ENCODE measurements at regions of chr9 and their contacts with region 1.

Region 1: GRCh38 chr9:27333241-27334052 is 36.5 kb upstream of the EQTN start:
- DNase-seq: peak; percentile 61
- H3K4me3 ChIP-seq: no peak overlapping the region
- H3K27ac ChIP-seq: no peak overlapping the region
- H3K4me1 ChIP-seq: peaks cover 6 to 34% (median 18%) of the 10 kb centered on the region in 4 donors
- H3K27me3 ChIP-seq: no peaks in the 10 kb centered on the region
- CTCF ChIP-seq: peak; percentile 85 to 95 (median 87)
- EP300 ChIP-seq: no peak
- POLR2A ChIP-seq: no peak

Region 2: DNA sequence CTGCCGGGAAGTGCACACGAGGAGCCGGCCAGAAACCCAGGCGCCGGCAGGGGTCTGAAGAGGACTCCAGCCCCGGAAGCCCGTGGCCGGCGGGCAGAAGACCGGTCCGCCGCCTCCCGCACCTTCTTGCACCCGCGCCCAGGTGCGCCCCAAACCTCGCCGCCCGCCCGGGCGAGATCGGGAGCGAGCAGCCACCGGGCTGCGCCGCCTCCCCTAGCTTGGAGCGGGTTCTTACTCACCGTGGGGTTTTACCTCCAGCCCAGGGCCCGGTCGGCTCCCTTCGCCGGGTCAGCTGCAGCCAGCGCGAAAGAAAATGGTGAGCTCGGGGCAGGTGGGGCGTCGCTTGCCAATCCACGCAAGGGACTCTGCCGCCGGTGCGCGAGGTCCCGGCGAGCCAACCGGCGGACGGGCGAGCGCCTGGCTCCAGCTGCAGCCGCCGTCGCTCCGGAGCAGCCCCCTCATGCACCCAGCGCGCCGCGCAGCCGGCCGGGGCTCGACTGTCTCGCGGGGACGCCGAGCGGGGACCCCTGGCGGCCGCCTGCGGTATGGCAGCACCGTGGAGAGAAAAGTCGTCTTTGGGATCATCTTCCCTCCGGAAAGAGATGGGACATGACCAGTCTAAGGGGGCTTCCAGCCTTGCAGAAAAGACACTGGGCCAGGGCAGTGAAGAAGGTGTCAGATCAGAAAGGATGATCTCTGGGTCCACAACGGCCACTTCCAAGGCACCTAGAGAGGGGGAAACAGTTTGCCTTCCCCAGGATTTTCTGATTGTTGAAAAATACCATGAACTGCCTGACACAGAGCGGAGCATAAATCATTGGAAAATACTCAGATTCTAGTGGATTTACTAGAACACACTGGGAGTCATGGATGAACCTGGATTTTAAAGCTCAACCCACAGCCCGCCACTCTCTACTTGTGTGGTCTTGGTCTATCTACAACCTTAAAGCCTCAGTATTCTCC is 196.2 kb after region 1 on chr9 and contains the start of gene MOB3B:
- in situ Hi-C with region 1: loop called in 1 of 4 experiments (anchors 5 kb)
- intact Hi-C with region 1: loop called (anchors 5 kb)
- DNase-seq: peak; percentile 88
- H3K4me3 ChIP-seq: peak within 1 kb of the TSS; percentile 57 to 90 (median 79)
- H3K27ac ChIP-seq: peak within 1 kb of the TSS; percentile 95 to 97 (median 95)
- H3K4me1 ChIP-seq: peaks cover 13 to 59% (median 23%) of the 10 kb centered on the region in 4 donors
- H3K27me3 ChIP-seq: no peaks in the 10 kb centered on the region
- CTCF ChIP-seq: peak; percentile 84 to 98 (median 92)
- EP300 ChIP-seq: no peak
- POLR2A ChIP-seq: no peak
- total RNA-seq, gene MOB3B: 18.3 to 39.7 (median 29.1) TPM

Region 3: GRCh38 chr9:27548055-27548741 is 214.8 kb after region 1 on chr9:
- in situ Hi-C with region 1: loop called in 3 of 4 experiments (anchors 5 to 10 kb)
- intact Hi-C with region 1: loop called (anchors 5 kb)
- DNase-seq: no peak
- H3K4me3 ChIP-seq: no peak overlapping the region
- H3K27ac ChIP-seq: no peak overlapping the region
- H3K4me1 ChIP-seq: peaks cover 0 to 15% (median 0%) of the 10 kb centered on the region in 4 donors
- H3K27me3 ChIP-seq: no peaks in the 10 kb centered on the region
- CTCF ChIP-seq: peak; percentile 40 to 58 (median 48)
- EP300 ChIP-seq: no peak
- POLR2A ChIP-seq: no peak

Measured in transverse colon (tissue), 4 donors.